ENCODE measurements at regions of chr22 and their contacts with region 1.

Region 1: GRCh38 chr22:22848364-22848866 is 39.2 kb upstream of the IGLL5 start:
- DNase-seq: peak; percentile 90
- ATAC-seq: peak; percentile 98
- H3K4me3 Mint-ChIP-seq: no peak overlapping the region
- H3K27ac Mint-ChIP-seq: no peak overlapping the region
- H3K4me1 Mint-ChIP-seq: no peaks in the 10 kb centered on the region; the same call in 1 of the 2 replicates
- H3K27me3 Mint-ChIP-seq: peaks cover 83% of the 10 kb centered on the region
- CTCF ChIP-seq: peak; percentile 82

Region 2: GRCh38 chr22:22802339-22802970 is 46.0 kb before region 1 on chr22:
- CTCF ChIA-PET with region 1: interaction called, 10 read pairs
- POLR2A ChIA-PET with region 1: no interaction called
- DNase-seq: no peak
- ATAC-seq: peak; percentile 62
- H3K4me3 Mint-ChIP-seq: no peak overlapping the region
- H3K27ac Mint-ChIP-seq: no peak overlapping the region
- H3K4me1 Mint-ChIP-seq: peaks cover 5% of the 10 kb centered on the region; the same call in 1 of the 2 replicates
- H3K27me3 Mint-ChIP-seq: peaks cover 94% of the 10 kb centered on the region
- CTCF ChIP-seq: no peak

Region 3: GRCh38 chr22:22810018-22810427 is 38.4 kb before region 1 on chr22:
- CTCF ChIA-PET with region 1: interaction called, 11 read pairs
- POLR2A ChIA-PET with region 1: no interaction called
- DNase-seq: peak; percentile 68
- ATAC-seq: peak; percentile 91
- H3K4me3 Mint-ChIP-seq: no peak overlapping the region
- H3K27ac Mint-ChIP-seq: no peak overlapping the region
- H3K4me1 Mint-ChIP-seq: no peaks in the 10 kb centered on the region
- H3K27me3 Mint-ChIP-seq: peaks cover 84% of the 10 kb centered on the region
- CTCF ChIP-seq: peak; percentile 66; the same call in 1 of the 2 replicates

Region 4: GRCh38 chr22:22835242-22835641 is 13.2 kb before region 1 on chr22:
- CTCF ChIA-PET with region 1: interaction called, 10 read pairs
- POLR2A ChIA-PET with region 1: no interaction called
- DNase-seq: no peak
- ATAC-seq: no peak
- H3K4me3 Mint-ChIP-seq: no peak overlapping the region
- H3K27ac Mint-ChIP-seq: no peak overlapping the region
- H3K4me1 Mint-ChIP-seq: no peaks in the 10 kb centered on the region
- H3K27me3 Mint-ChIP-seq: peaks cover 93% of the 10 kb centered on the region
- CTCF ChIP-seq: no peak

Region 5: GRCh38 chr22:22870577-22871404 is 22.4 kb after region 1 on chr22:
- CTCF ChIA-PET with region 1: interaction called, 13 read pairs
- POLR2A ChIA-PET with region 1: no interaction called
- DNase-seq: no peak
- ATAC-seq: peak; percentile 89
- H3K4me3 Mint-ChIP-seq: no peak overlapping the region
- H3K27ac Mint-ChIP-seq: no peak overlapping the region
- H3K4me1 Mint-ChIP-seq: no peaks in the 10 kb centered on the region
- H3K27me3 Mint-ChIP-seq: peaks cover 89% of the 10 kb centered on the region
- CTCF ChIP-seq: peak; percentile 12; the same call in 1 of the 2 replicates

Region 6: GRCh38 chr22:22877523-22878210 is 29.3 kb after region 1 on chr22:
- CTCF ChIA-PET with region 1: interaction called, 102 read pairs
- POLR2A ChIA-PET with region 1: no interaction called
- DNase-seq: peak; percentile 85
- ATAC-seq: peak; percentile 83
- H3K4me3 Mint-ChIP-seq: no peak overlapping the region
- H3K27ac Mint-ChIP-seq: no peak overlapping the region
- H3K4me1 Mint-ChIP-seq: no peaks in the 10 kb centered on the region
- H3K27me3 Mint-ChIP-seq: peaks cover 79% of the 10 kb centered on the region
- CTCF ChIP-seq: peak; percentile 78

Measured in WTC11 (cell line).